ENCODE measurements at regions of chr3 and their contacts with region 1.

Region 1: GRCh38 chr3:136703429-136703828 is 48.7 kb downstream of the STAG1 start:
- DNase-seq: no peak
- ATAC-seq: no peak
- H3K4me3 ChIP-seq: no peak overlapping the region
- H3K4me3 Mint-ChIP-seq: no peak overlapping the region
- H3K27ac ChIP-seq: no peak overlapping the region
- H3K27ac Mint-ChIP-seq: no peak overlapping the region
- H3K4me1 ChIP-seq: no peaks in the 10 kb centered on the region
- H3K4me1 Mint-ChIP-seq: peaks cover 46 to 57% (median 50%) of the 10 kb centered on the region in 3 donors
- H3K27me3 ChIP-seq: no peaks in the 10 kb centered on the region
- H3K27me3 Mint-ChIP-seq: no peaks in the 10 kb centered on the region

Region 2: DNA sequence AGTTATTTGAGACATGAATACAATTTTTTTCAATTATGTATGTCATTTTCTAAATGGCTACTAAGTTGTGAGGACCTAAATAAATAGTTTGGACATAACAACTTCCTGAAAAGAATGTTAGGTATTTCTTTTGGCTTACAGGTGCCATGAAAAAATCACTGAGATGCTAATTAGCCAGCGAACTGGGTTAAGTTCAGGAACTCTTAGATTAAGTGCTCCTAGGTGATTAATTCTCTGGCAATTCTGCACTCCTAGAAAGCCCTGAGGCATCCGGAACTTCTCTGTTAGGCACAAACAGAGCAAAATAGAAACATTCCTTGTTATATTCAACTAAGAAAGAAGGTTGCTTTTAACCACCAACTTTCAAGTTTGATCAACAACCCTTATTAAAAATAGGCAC is 143.5 kb before region 1 on chr3:
- CTCF ChIA-PET with region 1: no interaction called
- POLR2A ChIA-PET with region 1: no interaction called
- DNase-seq: no peak
- ATAC-seq: no peak
- H3K4me3 ChIP-seq: no peak overlapping the region
- H3K4me3 Mint-ChIP-seq: no peak overlapping the region
- H3K27ac ChIP-seq: no peak overlapping the region
- H3K27ac Mint-ChIP-seq: no peak overlapping the region
- H3K4me1 ChIP-seq: no peaks in the 10 kb centered on the region
- H3K4me1 Mint-ChIP-seq: peaks cover 5 to 9% (median 8%) of the 10 kb centered on the region in 3 donors
- H3K27me3 ChIP-seq: no peaks in the 10 kb centered on the region
- H3K27me3 Mint-ChIP-seq: no peaks in the 10 kb centered on the region

Region 3: GRCh38 chr3:136651581-136651980 is 51.8 kb before region 1 on chr3:
- CTCF ChIA-PET with region 1: no interaction called
- POLR2A ChIA-PET with region 1: no interaction called
- DNase-seq: no peak
- ATAC-seq: no peak
- H3K4me3 ChIP-seq: no peak overlapping the region
- H3K4me3 Mint-ChIP-seq: no peak overlapping the region
- H3K27ac ChIP-seq: no peak overlapping the region
- H3K27ac Mint-ChIP-seq: no peak overlapping the region
- H3K4me1 ChIP-seq: peaks cover 0 to 2% of the 10 kb centered on the region in 2 experiments
- H3K4me1 Mint-ChIP-seq: peaks cover 35 to 43% (median 37%) of the 10 kb centered on the region in 3 donors
- H3K27me3 ChIP-seq: no peaks in the 10 kb centered on the region
- H3K27me3 Mint-ChIP-seq: no peaks in the 10 kb centered on the region

Region 4: DNA sequence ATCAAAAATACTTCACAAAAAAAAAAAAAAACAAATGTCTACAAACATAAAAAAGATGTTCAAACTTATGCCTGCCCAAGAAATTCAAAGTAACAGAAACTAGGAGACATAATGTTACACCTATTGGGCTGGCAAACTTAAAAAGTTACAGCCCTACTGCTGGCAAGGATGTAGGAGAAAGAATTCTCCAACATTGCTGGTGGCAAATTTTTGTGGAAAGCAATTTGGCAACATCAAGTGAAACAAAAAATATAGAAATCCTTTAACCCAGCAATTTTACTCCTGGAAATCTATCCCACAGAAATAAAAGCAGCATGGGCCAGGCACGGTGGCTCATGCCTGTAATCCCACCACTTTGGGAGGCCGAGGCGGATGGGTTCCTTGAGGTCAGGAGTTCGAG is 24.4 kb before region 1 on chr3:
- CTCF ChIA-PET with region 1: no interaction called
- POLR2A ChIA-PET with region 1: no interaction called
- DNase-seq: no peak
- ATAC-seq: no peak
- H3K4me3 ChIP-seq: no peak overlapping the region
- H3K4me3 Mint-ChIP-seq: no peak overlapping the region
- H3K27ac ChIP-seq: no peak overlapping the region
- H3K27ac Mint-ChIP-seq: no peak overlapping the region
- H3K4me1 ChIP-seq: peaks cover 4 to 5% of the 10 kb centered on the region in 2 experiments
- H3K4me1 Mint-ChIP-seq: peaks cover 42 to 46% (median 46%) of the 10 kb centered on the region in 3 donors
- H3K27me3 ChIP-seq: no peaks in the 10 kb centered on the region
- H3K27me3 Mint-ChIP-seq: no peaks in the 10 kb centered on the region

Region 5: GRCh38 chr3:136720095-136720494 is 16.7 kb after region 1 on chr3:
- CTCF ChIA-PET with region 1: no interaction called
- POLR2A ChIA-PET with region 1: interaction called in 1 of 2 experiments, 10 read pairs
- DNase-seq: no peak
- ATAC-seq: no peak
- H3K4me3 ChIP-seq: no peak overlapping the region
- H3K4me3 Mint-ChIP-seq: no peak overlapping the region
- H3K27ac ChIP-seq: no peak overlapping the region
- H3K27ac Mint-ChIP-seq: no peak overlapping the region
- H3K4me1 ChIP-seq: peaks cover 2 to 12% of the 10 kb centered on the region in 2 experiments
- H3K4me1 Mint-ChIP-seq: peaks cover 26 to 35% (median 32%) of the 10 kb centered on the region in 3 donors
- H3K27me3 ChIP-seq: no peaks in the 10 kb centered on the region
- H3K27me3 Mint-ChIP-seq: no peaks in the 10 kb centered on the region